H1 (cell line): ENCODE measurements at regions of chr1 and their contacts with region 1.

Region 1: DNA sequence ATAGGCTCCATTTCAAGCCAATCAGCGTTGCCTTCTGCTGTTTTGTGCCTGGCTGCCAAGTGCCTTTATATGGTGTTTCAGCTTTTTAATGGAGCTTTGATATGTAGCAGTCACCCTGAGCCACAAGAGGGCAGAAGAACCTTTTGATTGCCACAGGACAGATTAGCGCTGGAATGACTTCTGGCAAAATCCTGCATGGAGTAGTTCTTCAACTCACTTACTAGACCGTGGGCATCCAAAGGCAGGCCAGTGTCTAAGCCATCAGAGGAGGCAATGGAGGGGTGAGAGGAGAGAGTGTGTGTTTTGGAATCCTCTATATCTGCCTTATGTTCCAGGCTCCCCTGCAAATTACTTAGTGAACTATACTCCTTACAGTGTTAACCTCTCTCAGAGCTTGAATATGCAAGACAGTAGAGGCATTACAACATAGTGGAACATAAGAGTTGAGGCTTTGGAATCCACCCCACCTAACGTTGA is 56.2 kb downstream of the ST3GAL3 start:
- DNase-seq: peak; percentile 39 to 63
- H3K4me3 ChIP-seq: no peak overlapping the region
- H3K27ac ChIP-seq: no peak overlapping the region
- H3K4me1 ChIP-seq: peaks cover 7 to 24% (median 21%) of the 10 kb centered on the region in 4 experiments
- H3K27me3 ChIP-seq: no peaks in the 10 kb centered on the region
- CTCF ChIP-seq: peak; percentile 26 to 93 (median 90)
- EP300 ChIP-seq: no peak
- POLR2A ChIP-seq: no peak
- RAD21 ChIP-seq: peak; percentile 99

Region 2: GRCh38 chr1:43466403-43466802 is 297.1 kb before region 1 on chr1:
- CTCF ChIA-PET with region 1: no interaction called
- POLR2A ChIA-PET with region 1: no interaction called
- DNase-seq: no peak
- H3K4me3 ChIP-seq: no peak overlapping the region
- H3K27ac ChIP-seq: no peak overlapping the region
- H3K4me1 ChIP-seq: no peaks in the 10 kb centered on the region
- H3K27me3 ChIP-seq: no peaks in the 10 kb centered on the region
- CTCF ChIP-seq: no peak
- EP300 ChIP-seq: no peak
- POLR2A ChIP-seq: no peak
- RAD21 ChIP-seq: no peak

Region 3: GRCh38 chr1:43783671-43784205 is 20.2 kb after region 1 on chr1:
- CTCF ChIA-PET with region 1: interaction called, 28 read pairs
- POLR2A ChIA-PET with region 1: interaction called, 3 read pairs
- DNase-seq: no peak
- H3K4me3 ChIP-seq: no peak overlapping the region
- H3K27ac ChIP-seq: no peak overlapping the region
- H3K4me1 ChIP-seq: peaks cover 0 to 4% (median 0%) of the 10 kb centered on the region in 4 experiments; a peak in 1 of 7 replicates
- H3K27me3 ChIP-seq: no peaks in the 10 kb centered on the region
- CTCF ChIP-seq: no peak
- EP300 ChIP-seq: no peak
- POLR2A ChIP-seq: no peak
- RAD21 ChIP-seq: no peak

Region 4: GRCh38 chr1:43853161-43853921 is 89.8 kb after region 1 on chr1:
- CTCF ChIA-PET with region 1: interaction called, 19 read pairs
- POLR2A ChIA-PET with region 1: no interaction called
- DNase-seq: no peak
- H3K4me3 ChIP-seq: no peak overlapping the region
- H3K27ac ChIP-seq: no peak overlapping the region
- H3K4me1 ChIP-seq: peaks cover 0 to 7% (median 6%) of the 10 kb centered on the region in 4 experiments; a peak in 4 of 7 replicates
- H3K27me3 ChIP-seq: no peaks in the 10 kb centered on the region
- CTCF ChIP-seq: no peak
- EP300 ChIP-seq: no peak
- POLR2A ChIP-seq: no peak
- RAD21 ChIP-seq: no peak; a peak in 1 of 4 replicates

Region 5: DNA sequence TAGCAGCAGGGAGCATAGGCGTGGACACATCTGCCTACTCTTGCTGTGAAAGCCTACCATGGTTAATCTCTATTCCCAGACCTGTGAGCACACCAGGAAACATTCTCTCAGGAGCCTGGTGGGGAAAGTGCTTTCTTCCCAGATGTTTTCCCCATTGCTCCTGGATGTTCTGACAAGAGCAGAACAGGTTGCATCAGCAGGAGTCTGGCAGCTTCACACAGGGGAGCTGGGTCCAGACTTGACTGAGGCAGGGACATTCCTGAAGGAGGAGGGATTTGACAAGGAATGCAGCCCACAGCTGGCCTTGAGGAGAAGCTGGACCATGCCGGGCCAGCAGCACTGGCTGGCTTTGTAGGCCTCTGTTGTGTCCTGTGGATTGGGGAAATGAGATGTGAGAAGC is 149.1 kb after region 1 on chr1:
- CTCF ChIA-PET with region 1: interaction called, 28 read pairs
- POLR2A ChIA-PET with region 1: interaction called, 3 read pairs
- DNase-seq: no peak
- H3K4me3 ChIP-seq: no peak overlapping the region
- H3K27ac ChIP-seq: no peak overlapping the region
- H3K4me1 ChIP-seq: peaks cover 3 to 21% (median 7%) of the 10 kb centered on the region in 4 experiments
- H3K27me3 ChIP-seq: no peaks in the 10 kb centered on the region
- CTCF ChIP-seq: no peak
- EP300 ChIP-seq: 0 out of 3 replicates have a peak, but pooled peaks of 1 of the 2 experiments have one; percentile 34
- POLR2A ChIP-seq: no peak
- RAD21 ChIP-seq: no peak

Region 6: GRCh38 chr1:43952731-43953346 is 189.3 kb after region 1 on chr1:
- CTCF ChIA-PET with region 1: interaction called, 112 read pairs
- POLR2A ChIA-PET with region 1: interaction called, 7 read pairs
- DNase-seq: peak in 1 of 2 experiments; percentile 78
- H3K4me3 ChIP-seq: no peak overlapping the region
- H3K27ac ChIP-seq: no peak overlapping the region
- H3K4me1 ChIP-seq: peaks cover 0 to 7% (median 5%) of the 10 kb centered on the region in 4 experiments; a peak in 5 of 7 replicates
- H3K27me3 ChIP-seq: no peaks in the 10 kb centered on the region
- CTCF ChIP-seq: no peak
- EP300 ChIP-seq: no peak
- POLR2A ChIP-seq: no peak
- RAD21 ChIP-seq: no peak